Naive thymus-derived CD4-positive, alpha-beta T cell (primary cell): ENCODE measurements at regions of chr3 and their contacts with region 1.

Region 1: DNA sequence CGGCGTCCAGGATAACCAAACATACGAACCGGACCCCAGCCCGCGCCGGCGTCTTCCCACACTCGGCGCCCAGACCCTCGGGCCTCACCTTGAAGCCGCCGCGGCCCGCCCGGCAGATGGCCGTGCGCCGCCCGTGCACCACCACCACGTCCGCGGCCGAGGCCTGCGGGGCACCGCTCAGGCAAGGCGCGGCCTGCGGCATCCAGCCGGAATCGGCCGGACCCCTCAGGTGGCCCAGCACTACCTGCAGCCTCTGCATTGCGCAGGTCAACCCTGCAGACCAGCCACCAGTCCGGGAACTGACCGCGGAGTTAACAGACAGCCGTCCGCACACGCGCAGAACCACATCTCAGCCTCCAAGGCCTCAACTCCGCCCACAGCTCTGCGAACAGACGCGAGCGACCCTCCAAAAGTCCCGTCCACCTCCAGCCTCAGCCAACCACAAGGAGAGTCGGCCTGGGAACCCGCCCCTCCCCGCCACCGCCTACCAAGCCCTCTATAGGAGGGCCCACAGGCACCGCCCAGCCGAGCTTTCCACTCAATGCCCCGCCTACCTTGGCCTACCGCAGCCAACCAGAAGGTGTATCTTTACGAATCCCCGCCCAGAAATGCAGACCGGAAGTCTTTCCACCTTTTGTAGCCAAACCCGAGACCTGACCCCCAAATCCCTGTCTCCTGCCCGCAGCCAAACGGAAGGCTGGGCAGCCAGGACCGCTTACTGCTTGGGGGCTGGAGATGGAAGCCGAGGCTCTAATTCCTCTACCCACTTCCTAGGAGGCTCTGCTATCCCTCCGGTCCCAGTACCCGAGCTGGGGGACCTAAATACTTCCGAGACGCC is at the start of gene ACAA1:
- DNase-seq: peak; percentile 82 to 96 (median 93)
- ATAC-seq: peak; percentile 96
- H3K4me3 ChIP-seq: peak within 1 kb of the TSS; percentile 98
- H3K4me3 Mint-ChIP-seq: peak within 1 kb of the TSS; percentile 90 to 100 (median 96)
- H3K27ac ChIP-seq: peak within 1 kb of the TSS; percentile 90
- H3K27ac Mint-ChIP-seq: peak within 1 kb of the TSS; percentile 89 to 100 (median 98)
- H3K4me1 ChIP-seq: peaks cover 18 to 35% of the 10 kb centered on the region in 2 donors
- H3K4me1 Mint-ChIP-seq: peaks cover 47 to 86% (median 67%) of the 10 kb centered on the region in 7 donors
- H3K27me3 ChIP-seq: no peaks in the 10 kb centered on the region
- H3K27me3 Mint-ChIP-seq: no peaks in the 10 kb centered on the region
- total RNA-seq, gene ACAA1: 88.1 to 129 (median 91.0) TPM

Region 2: DNA sequence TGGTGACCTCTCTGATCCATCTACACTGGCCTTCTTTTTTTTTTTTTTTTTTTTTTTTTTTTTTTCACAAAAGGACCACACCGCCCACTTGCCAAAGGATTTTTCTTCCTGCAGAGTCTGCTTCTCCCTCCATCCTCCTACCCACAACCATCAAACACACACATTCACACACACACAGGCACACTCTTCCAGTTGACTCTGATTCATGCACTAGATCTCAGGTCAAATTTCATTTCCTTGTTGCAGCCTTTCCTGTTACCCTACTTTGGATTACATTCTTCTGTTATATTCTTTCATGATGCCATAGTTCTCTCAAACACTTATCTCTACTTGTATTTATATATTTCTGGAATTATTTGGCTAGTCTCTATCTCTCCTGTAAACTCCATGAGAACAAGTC is 1622.8 kb before region 1 on chr3:
- CTCF ChIA-PET with region 1: no interaction called
- POLR2A ChIA-PET with region 1: no interaction called
- intact Hi-C with region 1: no loop called
- DNase-seq: no peak
- ATAC-seq: no peak
- H3K4me3 ChIP-seq: no peak overlapping the region
- H3K4me3 Mint-ChIP-seq: no peak overlapping the region
- H3K27ac ChIP-seq: no peak overlapping the region
- H3K27ac Mint-ChIP-seq: no peak overlapping the region
- H3K4me1 ChIP-seq: no peaks in the 10 kb centered on the region
- H3K4me1 Mint-ChIP-seq: no peaks in the 10 kb centered on the region
- H3K27me3 ChIP-seq: no peaks in the 10 kb centered on the region
- H3K27me3 Mint-ChIP-seq: peaks cover 0 to 11% (median 2%) of the 10 kb centered on the region in 5 donors

Region 3: DNA sequence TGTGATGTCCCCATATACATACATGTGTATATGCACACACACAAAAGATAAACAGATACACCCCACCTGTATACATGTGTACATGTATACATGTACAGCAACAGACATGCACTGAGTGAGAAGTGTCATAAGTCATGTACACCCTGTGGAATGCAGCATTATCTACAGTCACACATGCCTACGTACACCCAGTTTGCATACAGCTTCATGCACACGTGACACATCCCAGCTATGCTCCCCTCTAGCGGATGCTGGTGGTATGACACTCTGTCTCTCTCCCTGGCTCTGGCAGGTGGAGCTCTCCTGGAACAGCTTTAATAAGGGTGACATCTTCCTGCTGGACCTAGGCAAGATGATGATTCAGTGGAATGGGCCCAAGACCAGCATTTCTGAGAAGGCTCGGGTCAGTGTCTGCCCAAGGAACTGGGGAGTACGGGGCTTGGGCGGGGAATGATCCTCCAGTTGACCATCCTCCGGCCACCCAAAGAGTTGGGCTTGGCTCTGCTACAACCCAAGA is 140.2 kb before region 1 on chr3:
- CTCF ChIA-PET with region 1: no interaction called
- POLR2A ChIA-PET with region 1: interaction called, 4 read pairs
- intact Hi-C with region 1: loop called in 1 of 2 experiments (anchors 1 kb)
- DNase-seq: peak; percentile 59 to 82 (median 76)
- ATAC-seq: peak; percentile 78
- H3K4me3 ChIP-seq: no peak overlapping the region
- H3K4me3 Mint-ChIP-seq: peak overlapping the region in 9 of 10 donors; percentile 47 to 83 (median 71)
- H3K27ac ChIP-seq: no peak overlapping the region
- H3K27ac Mint-ChIP-seq: peak overlapping the region; percentile 80 to 97 (median 96)
- H3K4me1 ChIP-seq: peaks cover 47 to 48% of the 10 kb centered on the region in 2 donors
- H3K4me1 Mint-ChIP-seq: peaks cover 39 to 69% (median 62%) of the 10 kb centered on the region in 7 donors
- H3K27me3 ChIP-seq: no peaks in the 10 kb centered on the region
- H3K27me3 Mint-ChIP-seq: no peaks in the 10 kb centered on the region

Region 4: DNA sequence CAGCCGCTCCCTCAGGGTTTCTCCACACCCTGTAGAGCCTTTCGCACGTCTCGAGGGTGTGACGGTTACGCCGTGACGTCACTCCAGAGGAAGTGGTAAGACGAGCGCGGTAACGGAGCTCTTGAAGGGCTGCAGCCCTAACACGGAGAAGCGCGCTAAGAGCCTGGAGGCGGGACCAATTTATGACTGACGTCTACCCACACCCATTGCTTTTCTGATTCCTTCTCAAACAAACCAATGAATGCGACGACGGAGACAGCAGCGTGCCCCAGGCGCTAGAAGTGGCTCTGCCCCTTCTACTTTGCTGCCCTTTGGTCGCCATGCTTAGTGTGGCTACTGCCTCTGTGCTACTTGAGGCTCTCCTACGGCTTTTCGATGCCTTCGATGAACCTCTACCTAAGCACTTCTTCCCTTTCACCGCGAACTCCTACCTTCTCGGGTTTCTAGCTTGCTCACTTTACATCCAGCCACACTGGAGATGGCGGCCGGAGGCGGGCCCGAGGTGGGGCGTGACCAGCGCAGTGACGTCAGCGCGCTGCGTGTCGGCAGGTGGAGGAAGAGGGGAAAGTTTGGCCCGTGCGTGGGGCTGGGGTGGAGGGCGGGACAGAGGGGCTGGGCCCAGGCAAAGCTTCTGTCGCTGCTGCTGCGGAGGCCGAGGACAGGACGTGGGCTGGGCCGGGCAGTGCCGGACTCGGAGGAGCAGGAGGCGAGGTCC is 28.1 kb after region 1 on chr3 and contains the start of gene OXSR1:
- CTCF ChIA-PET with region 1: interaction called, 7 read pairs
- POLR2A ChIA-PET with region 1: interaction called, 156 read pairs
- intact Hi-C with region 1: loop called (anchors 1 kb)
- DNase-seq: peak; percentile 94 to 99 (median 98)
- ATAC-seq: peak; percentile 93
- H3K4me3 ChIP-seq: peak within 1 kb of the TSS; percentile 84
- H3K4me3 Mint-ChIP-seq: peak within 1 kb of the TSS; percentile 90 to 98 (median 96)
- H3K27ac ChIP-seq: peak within 1 kb of the TSS; percentile 98
- H3K27ac Mint-ChIP-seq: peak within 1 kb of the TSS; percentile 99 to 100 (median 100)
- H3K4me1 ChIP-seq: peaks cover 18 to 22% of the 10 kb centered on the region in 2 donors
- H3K4me1 Mint-ChIP-seq: peaks cover 25 to 49% (median 44%) of the 10 kb centered on the region in 7 donors
- H3K27me3 ChIP-seq: no peaks in the 10 kb centered on the region
- H3K27me3 Mint-ChIP-seq: peaks cover 0 to 6% (median 0%) of the 10 kb centered on the region in 5 donors
- total RNA-seq, gene OXSR1: 35.0 to 59.7 (median 38.8) TPM

Region 5: DNA sequence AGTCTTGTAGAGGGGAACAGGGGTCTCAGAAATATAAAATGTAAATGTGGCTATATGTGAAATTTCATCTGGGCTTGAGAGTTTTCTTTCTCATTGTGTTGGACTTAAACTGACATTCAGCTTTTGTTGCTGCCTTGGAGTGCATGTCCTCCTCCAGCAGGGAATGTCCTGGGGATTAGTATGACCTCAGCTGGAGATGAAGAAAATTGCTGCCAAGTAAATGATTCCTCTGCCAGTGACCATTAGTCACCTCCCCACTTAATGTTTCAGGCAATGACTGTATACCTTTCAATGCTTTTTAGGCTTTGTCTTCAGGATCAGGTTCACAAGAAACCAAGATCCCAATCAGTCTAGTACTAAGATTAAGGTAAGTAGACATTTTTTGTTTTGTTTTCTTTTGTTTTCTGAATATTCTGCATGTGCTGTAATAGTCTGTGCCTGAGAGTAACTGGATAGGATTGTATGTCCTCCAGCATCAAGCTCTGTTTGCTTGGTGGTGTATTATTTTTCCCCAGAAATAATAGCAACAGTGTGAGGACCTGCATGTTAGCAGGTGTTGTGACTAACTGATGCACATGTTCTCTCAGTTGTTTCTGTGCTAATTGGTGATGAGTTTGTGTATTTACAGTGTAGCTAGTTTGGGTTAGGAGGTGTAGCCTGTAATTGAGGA is 110.5 kb after region 1 on chr3:
- CTCF ChIA-PET with region 1: no interaction called
- POLR2A ChIA-PET with region 1: no interaction called
- intact Hi-C with region 1: loop called in 1 of 2 experiments (anchors 5 kb)
- DNase-seq: no peak
- ATAC-seq: no peak
- H3K4me3 ChIP-seq: no peak overlapping the region
- H3K4me3 Mint-ChIP-seq: no peak overlapping the region
- H3K27ac ChIP-seq: no peak overlapping the region
- H3K27ac Mint-ChIP-seq: peak overlapping the region in 2 of 9 donors; percentile 55 to 91
- H3K4me1 ChIP-seq: no peaks in the 10 kb centered on the region
- H3K4me1 Mint-ChIP-seq: peaks cover 0 to 6% (median 0%) of the 10 kb centered on the region in 7 donors
- H3K27me3 ChIP-seq: no peaks in the 10 kb centered on the region
- H3K27me3 Mint-ChIP-seq: no peaks in the 10 kb centered on the region

Region 6: DNA sequence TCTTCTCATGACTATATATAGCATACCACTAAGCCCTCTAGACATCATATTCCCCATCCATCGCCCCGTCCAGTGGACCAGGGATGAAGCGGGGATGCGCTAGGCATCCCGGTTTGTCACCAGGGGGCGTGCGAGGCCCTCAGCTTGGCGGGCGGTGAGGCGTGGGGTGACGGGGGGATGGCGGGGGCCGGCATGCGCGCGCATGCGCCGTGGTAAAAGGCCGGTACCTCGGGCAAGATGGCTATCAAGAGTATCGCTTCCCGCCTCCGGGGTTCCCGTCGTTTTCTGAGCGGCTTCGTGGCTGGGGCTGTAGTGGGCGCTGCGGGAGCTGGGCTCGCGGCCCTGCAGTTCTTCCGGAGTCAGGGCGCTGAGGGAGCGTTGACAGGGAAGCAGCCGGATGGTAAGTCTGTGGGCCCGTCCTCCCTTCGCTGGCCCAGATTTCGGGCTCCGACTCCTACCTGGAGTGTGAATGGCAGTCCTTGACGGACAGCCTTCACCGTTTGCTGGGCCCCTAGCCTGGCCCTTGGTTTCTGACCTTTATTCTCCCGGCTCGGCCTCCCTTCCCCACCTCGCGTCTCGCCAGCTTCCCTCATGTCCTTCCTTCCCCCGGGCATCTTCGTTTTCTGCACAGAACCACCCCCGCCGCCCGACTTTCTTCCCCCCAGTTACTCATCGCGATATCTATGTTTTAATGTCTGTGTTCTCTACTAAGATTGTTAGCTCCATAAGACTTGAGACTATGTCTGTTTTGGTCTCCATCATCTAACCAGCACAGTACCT is 359.3 kb after region 1 on chr3 and contains the start of gene EXOG:
- CTCF ChIA-PET with region 1: no interaction called
- POLR2A ChIA-PET with region 1: no interaction called
- intact Hi-C with region 1: loop called (anchors 5 kb)
- DNase-seq: peak; percentile 79 to 93 (median 89)
- ATAC-seq: peak; percentile 98
- H3K4me3 ChIP-seq: peak within 1 kb of the TSS; percentile 92
- H3K4me3 Mint-ChIP-seq: peak within 1 kb of the TSS; percentile 82 to 98 (median 95)
- H3K27ac ChIP-seq: peak within 1 kb of the TSS; percentile 75
- H3K27ac Mint-ChIP-seq: peak within 1 kb of the TSS; percentile 20 to 94 (median 86)
- H3K4me1 ChIP-seq: peaks cover 0 to 8% of the 10 kb centered on the region in 2 donors
- H3K4me1 Mint-ChIP-seq: peaks cover 4 to 29% (median 24%) of the 10 kb centered on the region in 7 donors
- H3K27me3 ChIP-seq: no peaks in the 10 kb centered on the region
- H3K27me3 Mint-ChIP-seq: no peaks in the 10 kb centered on the region
- total RNA-seq, gene EXOG: 20.4 to 31.0 (median 21.3) TPM

Region 7: GRCh38 chr3:39107388-39108199 is 970.6 kb after region 1 on chr3 and contains the starts of genes GORASP1 and TTC21A:
- CTCF ChIA-PET with region 1: no interaction called
- POLR2A ChIA-PET with region 1: no interaction called
- intact Hi-C with region 1: loop called in 1 of 2 experiments (anchors 5 kb)
- DNase-seq: peak; percentile 33 to 79 (median 53)
- ATAC-seq: peak; percentile 74
- H3K4me3 ChIP-seq: peak within 1 kb of the TSS; percentile 95
- H3K4me3 Mint-ChIP-seq: peak within 1 kb of the TSS; percentile 88 to 100 (median 96)
- H3K27ac ChIP-seq: peak within 1 kb of the TSS; percentile 78
- H3K27ac Mint-ChIP-seq: peak within 1 kb of the TSS; percentile 84 to 96 (median 92)
- H3K4me1 ChIP-seq: peaks cover 18 to 22% of the 10 kb centered on the region in 2 donors
- H3K4me1 Mint-ChIP-seq: peaks cover 45 to 62% (median 52%) of the 10 kb centered on the region in 7 donors
- H3K27me3 ChIP-seq: no peaks in the 10 kb centered on the region
- H3K27me3 Mint-ChIP-seq: peaks cover 0 to 5% (median 0%) of the 10 kb centered on the region in 5 donors
- total RNA-seq, gene GORASP1: 28.2 to 58.5 (median 44.6) TPM
- total RNA-seq, gene TTC21A: 2.8 to 9.7 (median 5.3) TPM